Sciatic nerve (tissue), 2 donors: ENCODE measurements at regions of chr11 and their contacts with region 1.

Region 1: DNA sequence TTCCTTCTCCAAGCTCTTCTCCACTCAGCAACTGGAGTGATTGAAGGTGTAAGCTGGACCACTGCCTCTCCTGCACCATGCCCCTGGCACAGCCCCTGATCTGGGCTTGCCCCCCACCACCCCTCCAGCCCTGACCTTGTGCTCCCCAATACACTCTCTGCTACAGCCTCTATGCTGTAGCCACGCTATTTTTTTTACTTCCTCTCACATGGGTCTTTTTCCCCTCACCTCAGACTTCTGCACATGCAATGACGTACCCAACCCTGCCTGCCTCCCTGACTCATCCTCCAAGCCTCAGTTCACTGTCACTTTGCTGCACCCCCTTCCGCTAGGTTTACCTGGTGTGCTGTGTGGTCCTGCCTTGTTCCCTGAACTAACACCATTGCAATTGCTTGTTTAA is 9.0 kb downstream of the CSNK2A3 start:
- DNase-seq: no peak
- ATAC-seq: no peak

Region 2: GRCh38 chr11:9691865-9692264 is 1652.2 kb before region 1 on chr11:
- intact Hi-C with region 1: loop called (anchors 5 kb)
- DNase-seq: no peak
- ATAC-seq: no peak